ENCODE measurements at regions of chr15 and their contacts with region 1.

Region 1: GRCh38 chr15:59104912-59105732 is at the start of gene CCNB2:
- DNase-seq: peak; percentile 92
- ATAC-seq: peak; percentile 99
- H3K4me3 ChIP-seq: peak within 1 kb of the TSS; percentile 84 to 96 (median 84)
- H3K27ac ChIP-seq: peak within 1 kb of the TSS; percentile 86
- H3K4me1 ChIP-seq: peaks cover 29% of the 10 kb centered on the region
- H3K27me3 ChIP-seq: no peaks in the 10 kb centered on the region
- CTCF ChIP-seq: no peak
- EP300 ChIP-seq: no peak
- POLR2A ChIP-seq: peak; percentile 91 to 96
- RAD21 ChIP-seq: peak; percentile 48
- total RNA-seq, gene CCNB2: 80.9 and 108 TPM in 2 replicates

Region 2: GRCh38 chr15:58852347-58852746 is 252.8 kb before region 1 on chr15:
- CTCF ChIA-PET with region 1: no interaction called
- POLR2A ChIA-PET with region 1: no interaction called
- in situ Hi-C with region 1: no loop called
- intact Hi-C with region 1: no loop called
- DNase-seq: peak; percentile 42
- ATAC-seq: peak; percentile 59
- H3K4me3 ChIP-seq: no peak overlapping the region
- H3K27ac ChIP-seq: no peak overlapping the region
- H3K4me1 ChIP-seq: peaks cover 4% of the 10 kb centered on the region; the same call in 1 of the 2 replicates
- H3K27me3 ChIP-seq: no peaks in the 10 kb centered on the region
- CTCF ChIP-seq: peak; percentile 29
- EP300 ChIP-seq: no peak
- POLR2A ChIP-seq: no peak
- RAD21 ChIP-seq: 0 out of 2 replicates have a peak, but pooled peaks have one; percentile 15

Region 3: GRCh38 chr15:58987489-58988005 is 117.6 kb before region 1 on chr15 and contains the start of gene RNF111:
- CTCF ChIA-PET with region 1: no interaction called
- POLR2A ChIA-PET with region 1: no interaction called
- in situ Hi-C with region 1: no loop called
- intact Hi-C with region 1: loop called (anchors 10 kb)
- DNase-seq: peak; percentile 93
- ATAC-seq: peak; percentile 80
- H3K4me3 ChIP-seq: peak within 1 kb of the TSS; percentile 90 to 99 (median 97)
- H3K27ac ChIP-seq: peak within 1 kb of the TSS; percentile 97
- H3K4me1 ChIP-seq: peaks cover 37% of the 10 kb centered on the region
- H3K27me3 ChIP-seq: no peaks in the 10 kb centered on the region; a peak in 1 of 5 replicates
- CTCF ChIP-seq: no peak
- EP300 ChIP-seq: no peak
- POLR2A ChIP-seq: peak; percentile 50 to 69; a peak in 3 of 4 replicates
- RAD21 ChIP-seq: no peak
- total RNA-seq, gene RNF111: 12.1 and 16.0 TPM in 2 replicates

Region 4: GRCh38 chr15:59051873-59052861 is 53.0 kb before region 1 on chr15:
- CTCF ChIA-PET with region 1: no interaction called
- POLR2A ChIA-PET with region 1: no interaction called
- in situ Hi-C with region 1: no loop called
- intact Hi-C with region 1: no loop called
- DNase-seq: no peak
- ATAC-seq: no peak
- H3K4me3 ChIP-seq: no peak overlapping the region
- H3K27ac ChIP-seq: no peak overlapping the region
- H3K4me1 ChIP-seq: no peaks in the 10 kb centered on the region
- H3K27me3 ChIP-seq: no peaks in the 10 kb centered on the region
- CTCF ChIP-seq: no peak
- EP300 ChIP-seq: no peak
- POLR2A ChIP-seq: no peak
- RAD21 ChIP-seq: no peak

Region 5: GRCh38 chr15:59063042-59063441 is 42.1 kb before region 1 on chr15:
- CTCF ChIA-PET with region 1: no interaction called
- POLR2A ChIA-PET with region 1: no interaction called
- in situ Hi-C with region 1: no loop called
- intact Hi-C with region 1: no loop called
- DNase-seq: no peak
- ATAC-seq: no peak
- H3K4me3 ChIP-seq: no peak overlapping the region
- H3K27ac ChIP-seq: no peak overlapping the region
- H3K4me1 ChIP-seq: no peaks in the 10 kb centered on the region
- H3K27me3 ChIP-seq: no peaks in the 10 kb centered on the region
- CTCF ChIP-seq: no peak
- EP300 ChIP-seq: no peak
- POLR2A ChIP-seq: no peak
- RAD21 ChIP-seq: no peak